Dendritic cell treated with granulocyte-macrophage colony-stimulating factor and Interleukin-4, amounts not matched to agents 40 ng/mL and 50 ng/mL, for 4 days (primary cell): ENCODE measurements at regions of chr17 and their contacts with region 1.

Region 1: DNA sequence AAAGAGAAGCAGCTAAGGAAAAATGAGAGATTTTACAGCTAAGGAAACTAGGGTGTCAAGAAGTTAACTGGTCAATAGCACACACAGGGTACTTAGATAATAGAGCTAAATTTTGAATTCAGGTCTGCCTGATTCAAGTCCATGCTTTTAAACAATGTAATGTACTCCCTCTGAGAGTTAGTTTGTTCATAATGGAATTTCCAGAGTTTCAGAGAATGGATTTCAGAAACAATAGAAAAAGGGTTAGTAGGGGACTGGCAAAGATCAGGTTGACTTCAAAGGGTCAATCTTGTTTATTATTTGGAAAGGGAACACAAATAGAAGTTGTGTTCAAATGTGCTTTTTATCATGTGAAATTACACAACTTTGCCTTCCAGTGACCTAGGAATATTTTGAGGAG is 17.9 kb downstream of the NSRP1 start:
- H3K4me3 Mint-ChIP-seq: no peak overlapping the region
- H3K27ac Mint-ChIP-seq: no peak overlapping the region
- H3K4me1 Mint-ChIP-seq: no peaks in the 10 kb centered on the region
- H3K27me3 Mint-ChIP-seq: no peaks in the 10 kb centered on the region

Region 2: GRCh38 chr17:30062372-30062771 is 72.2 kb before region 1 on chr17:
- intact Hi-C with region 1: no loop called
- H3K4me3 Mint-ChIP-seq: no peak overlapping the region
- H3K27ac Mint-ChIP-seq: no peak overlapping the region
- H3K4me1 Mint-ChIP-seq: no peaks in the 10 kb centered on the region
- H3K27me3 Mint-ChIP-seq: peaks cover 3% of the 10 kb centered on the region

Region 3: GRCh38 chr17:30263552-30264333 is 129.2 kb after region 1 on chr17:
- intact Hi-C with region 1: loop called (anchors 10 kb)
- H3K4me3 Mint-ChIP-seq: no peak overlapping the region
- H3K27ac Mint-ChIP-seq: no peak overlapping the region
- H3K4me1 Mint-ChIP-seq: no peaks in the 10 kb centered on the region
- H3K27me3 Mint-ChIP-seq: no peaks in the 10 kb centered on the region

Region 4: GRCh38 chr17:30336369-30337171 is 202.0 kb after region 1 on chr17:
- intact Hi-C with region 1: loop called (anchors 5 kb)
- H3K4me3 Mint-ChIP-seq: no peak overlapping the region
- H3K27ac Mint-ChIP-seq: peak overlapping the region; percentile 36
- H3K4me1 Mint-ChIP-seq: peaks cover 25% of the 10 kb centered on the region
- H3K27me3 Mint-ChIP-seq: no peaks in the 10 kb centered on the region